Mammary epithelial cell (primary cell): ENCODE measurements at regions of chr22 and their contacts with region 1.

Region 1: GRCh38 chr22:19607192-19608002 is 83.2 kb upstream of the CLDN5 start:
- DNase-seq: peak; percentile 51
- H3K4me3 ChIP-seq: peak overlapping the region in 1 of 3 experiments; percentile 7
- H3K27ac ChIP-seq: peak overlapping the region; percentile 2
- H3K4me1 ChIP-seq: peaks cover 9% of the 10 kb centered on the region
- H3K27me3 ChIP-seq: no peaks in the 10 kb centered on the region
- CTCF ChIP-seq: no peak

Region 2: GRCh38 chr22:19523240-19524169 is 83.9 kb before region 1 on chr22:
- CTCF ChIA-PET with region 1: no interaction called
- dilution Hi-C with region 1: loop called (anchors 5 kb)
- in situ Hi-C with region 1: no loop called
- intact Hi-C with region 1: no loop called
- DNase-seq: peak; percentile 26
- H3K4me3 ChIP-seq: no peak overlapping the region
- H3K27ac ChIP-seq: no peak overlapping the region
- H3K4me1 ChIP-seq: peaks cover 9% of the 10 kb centered on the region
- H3K27me3 ChIP-seq: peaks cover 7% of the 10 kb centered on the region
- CTCF ChIP-seq: no peak

Region 3: GRCh38 chr22:19641254-19641982 is 34.0 kb after region 1 on chr22:
- CTCF ChIA-PET with region 1: no interaction called
- dilution Hi-C with region 1: no loop called
- in situ Hi-C with region 1: no loop called
- intact Hi-C with region 1: no loop called
- DNase-seq: peak; percentile 34
- H3K4me3 ChIP-seq: peak overlapping the region in 2 of 3 experiments; percentile 29 to 43
- H3K27ac ChIP-seq: no peak overlapping the region
- H3K4me1 ChIP-seq: peaks cover 3% of the 10 kb centered on the region
- H3K27me3 ChIP-seq: no peaks in the 10 kb centered on the region
- CTCF ChIP-seq: peak; percentile 50 to 71

Region 4: DNA sequence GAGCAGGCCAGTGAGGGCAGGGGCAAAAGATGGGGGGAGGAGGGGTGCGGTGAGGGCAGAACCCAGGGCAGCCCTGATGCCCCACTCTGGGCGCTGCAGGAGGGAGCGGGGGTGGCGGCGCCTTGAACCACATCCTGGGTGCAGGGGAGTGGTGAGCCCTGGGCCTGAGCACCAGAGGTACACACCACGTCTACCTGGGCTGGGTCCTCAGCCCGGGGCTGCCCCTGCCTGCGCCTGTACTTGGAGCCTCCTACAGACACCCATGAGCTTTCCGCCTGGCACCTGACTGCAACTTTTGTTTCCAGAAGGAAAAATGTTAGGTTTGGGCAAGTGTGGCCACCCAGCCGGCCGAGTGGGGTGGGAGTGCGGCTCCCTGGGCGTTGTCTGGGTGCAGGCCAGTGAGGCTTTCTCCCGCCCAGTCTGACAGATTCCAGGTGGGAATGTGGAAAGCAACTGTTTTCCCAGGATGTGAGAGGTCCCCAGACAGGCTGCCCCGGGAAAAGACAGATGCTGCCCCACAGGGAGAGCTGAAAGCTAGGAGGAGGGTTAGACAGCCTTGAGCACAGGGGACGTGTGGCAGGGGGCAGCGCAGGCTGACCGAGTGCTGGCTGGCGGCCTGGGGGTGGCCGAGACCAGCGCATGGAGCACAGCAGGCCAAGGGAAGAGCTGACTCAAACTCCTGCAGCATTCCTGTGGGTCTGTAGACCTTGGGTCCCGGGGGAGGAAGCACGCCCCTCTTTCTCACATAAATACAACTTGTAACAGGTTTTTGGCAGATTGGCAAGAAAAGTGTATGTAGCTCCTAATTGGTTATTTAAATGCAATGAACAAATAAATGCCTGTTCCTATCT is 203.2 kb after region 1 on chr22:
- CTCF ChIA-PET with region 1: no interaction called
- dilution Hi-C with region 1: no loop called
- in situ Hi-C with region 1: no loop called
- intact Hi-C with region 1: no loop called
- DNase-seq: no peak
- H3K4me3 ChIP-seq: no peak overlapping the region
- H3K27ac ChIP-seq: no peak overlapping the region
- H3K4me1 ChIP-seq: peaks cover 38% of the 10 kb centered on the region
- H3K27me3 ChIP-seq: no peaks in the 10 kb centered on the region
- CTCF ChIP-seq: no peak